ENCODE measurements at regions of chr20 and their contacts with region 1.

Region 1: GRCh38 chr20:36064658-36065426 is 89.7 kb upstream of the EPB41L1 start:
- DNase-seq: peak; percentile 94 to 99 (median 96)
- ATAC-seq: peak; percentile 96 to 99 (median 98)
- H3K4me3 ChIP-seq: peak overlapping the region; percentile 44 to 83 (median 65)
- H3K27ac ChIP-seq: peak overlapping the region; percentile 67 to 91 (median 82)
- H3K4me1 ChIP-seq: peaks cover 0 to 24% (median 11%) of the 10 kb centered on the region in 12 donors
- H3K27me3 ChIP-seq: no peaks in the 10 kb centered on the region
- CTCF ChIP-seq: peak in 2 of 12 donors; percentile 4 to 6
- POLR2A ChIP-seq: peak; percentile 37 to 89

Region 2: DNA sequence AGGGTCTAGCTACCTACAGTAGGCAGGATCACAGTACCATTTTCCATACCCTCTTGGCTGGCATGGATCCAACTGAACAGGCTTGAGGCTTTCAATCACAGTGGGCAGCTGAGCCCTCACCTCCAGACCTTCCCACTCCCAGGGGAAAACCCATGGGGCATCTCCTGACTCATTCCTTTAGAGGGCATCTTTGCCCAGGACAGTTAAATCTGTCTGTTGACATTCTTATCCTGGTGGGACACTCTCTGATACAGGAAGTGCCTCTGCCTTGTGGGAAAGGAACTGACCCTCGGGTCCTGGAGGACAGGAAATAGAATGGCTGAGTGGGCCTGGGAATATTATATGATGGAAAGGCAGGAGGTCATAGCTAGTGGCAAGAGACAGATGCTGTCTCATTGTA is 79.5 kb after region 1 on chr20:
- intact Hi-C with region 1: loop called in 1 of 10 experiments (anchors 5 kb)
- DNase-seq: no peak
- ATAC-seq: no peak
- H3K4me3 ChIP-seq: no peak overlapping the region
- H3K27ac ChIP-seq: peak overlapping the region in 3 of 12 donors; percentile 22 to 52 (median 28)
- H3K4me1 ChIP-seq: peaks cover 0 to 49% (median 18%) of the 10 kb centered on the region in 12 donors
- H3K27me3 ChIP-seq: no peaks in the 10 kb centered on the region
- CTCF ChIP-seq: no peak
- POLR2A ChIP-seq: no peak